ENCODE measurements at regions of chr10 and their contacts with region 1.

Region 1: DNA sequence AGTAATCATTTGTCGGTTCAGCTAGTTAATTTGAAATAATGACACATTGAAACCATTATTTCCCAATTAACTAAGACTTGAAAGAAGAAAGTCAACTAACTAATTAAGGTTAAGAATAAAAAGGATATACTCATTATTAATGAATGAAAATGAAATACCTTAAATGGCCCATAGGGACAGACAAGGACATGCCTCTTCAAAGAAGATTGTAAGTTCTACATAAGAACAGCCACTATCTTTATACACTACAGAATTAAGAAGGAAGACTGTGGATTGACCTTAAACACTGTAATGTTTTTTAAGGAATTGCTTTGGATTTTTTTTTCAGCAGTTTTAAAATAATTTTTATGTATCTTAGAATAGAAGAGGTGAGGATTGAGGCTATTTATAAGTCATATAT is 60.7 kb downstream of the CSTF2T start:
- DNase-seq: no peak
- ATAC-seq: no peak
- H3K4me3 ChIP-seq: no peak overlapping the region
- H3K27ac ChIP-seq: no peak overlapping the region
- H3K4me1 ChIP-seq: no peaks in the 10 kb centered on the region
- H3K27me3 ChIP-seq: no peaks in the 10 kb centered on the region
- CTCF ChIP-seq: no peak
- POLR2A ChIP-seq: no peak
- RAD21 ChIP-seq: no peak

Region 2: DNA sequence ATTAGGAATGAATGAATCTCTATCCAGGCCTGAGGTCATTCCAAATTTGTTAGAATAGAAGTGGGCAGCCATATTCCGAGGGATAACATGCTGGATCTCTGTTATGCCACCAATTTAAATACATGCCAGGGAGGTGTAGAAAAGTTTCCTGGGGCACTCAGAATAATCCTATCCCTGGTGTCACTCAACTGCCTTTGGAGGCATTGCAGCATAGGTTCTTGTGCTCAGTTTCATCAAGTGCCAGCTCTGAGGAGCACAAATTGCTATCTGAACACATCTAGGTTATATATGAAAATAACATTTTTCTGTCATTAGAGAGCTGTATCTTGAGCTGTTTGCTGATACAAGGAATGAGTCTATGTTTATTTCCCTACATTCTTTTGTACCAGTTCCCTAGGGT is 136.6 kb before region 1 on chr10:
- CTCF ChIA-PET with region 1: no interaction called
- POLR2A ChIA-PET with region 1: interaction called, 12 read pairs
- dilution Hi-C with region 1: no loop called
- in situ Hi-C with region 1: no loop called
- intact Hi-C with region 1: no loop called
- DNase-seq: peak; percentile 11
- ATAC-seq: peak; percentile 67
- H3K4me3 ChIP-seq: no peak overlapping the region
- H3K27ac ChIP-seq: no peak overlapping the region
- H3K4me1 ChIP-seq: peaks cover 3% of the 10 kb centered on the region; the same call in 1 of the 2 replicates
- H3K27me3 ChIP-seq: no peaks in the 10 kb centered on the region
- CTCF ChIP-seq: no peak
- POLR2A ChIP-seq: no peak
- RAD21 ChIP-seq: no peak

Region 3: DNA sequence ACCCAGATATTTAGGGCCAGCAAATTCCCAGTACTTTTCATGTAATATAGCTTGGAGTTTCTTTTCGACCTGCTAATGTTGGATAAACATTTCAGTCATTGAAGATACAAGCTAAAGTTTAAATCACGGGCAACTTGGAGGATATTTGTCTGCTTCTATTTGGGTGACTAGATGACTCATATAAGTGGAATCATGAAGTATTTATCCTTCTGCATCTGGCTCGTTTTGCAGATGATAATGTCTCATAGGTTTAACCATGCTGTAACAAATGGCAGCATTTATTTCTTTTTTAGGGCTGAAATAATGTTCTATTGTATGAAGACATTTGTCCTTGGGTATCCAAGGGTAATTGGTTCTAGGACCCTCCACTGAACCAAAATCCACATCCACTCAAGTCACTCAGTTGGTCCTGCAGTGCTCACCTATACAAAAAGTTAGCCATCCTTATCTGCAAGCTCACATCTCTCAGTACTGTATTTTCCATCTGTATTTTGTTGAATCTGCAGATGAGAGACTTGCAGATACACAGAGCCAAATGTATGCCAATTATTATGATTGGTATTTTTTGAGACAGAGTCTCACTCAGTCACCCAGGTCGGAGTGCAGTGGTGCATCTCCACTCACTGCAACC is 247.8 kb after region 1 on chr10:
- CTCF ChIA-PET with region 1: no interaction called
- POLR2A ChIA-PET with region 1: no interaction called
- dilution Hi-C with region 1: no loop called
- in situ Hi-C with region 1: no loop called
- intact Hi-C with region 1: no loop called
- DNase-seq: peak; percentile 84
- ATAC-seq: peak; percentile 86
- H3K4me3 ChIP-seq: no peak overlapping the region
- H3K27ac ChIP-seq: no peak overlapping the region; the same call in 1 of the 2 replicates
- H3K4me1 ChIP-seq: peaks cover 7% of the 10 kb centered on the region
- H3K27me3 ChIP-seq: no peaks in the 10 kb centered on the region
- CTCF ChIP-seq: no peak
- POLR2A ChIP-seq: no peak
- RAD21 ChIP-seq: no peak